GM18951 (cell line): ENCODE measurements at regions of chr11 and their contacts with region 1.

Region 1: GRCh38 chr11:87352759-87353707 is 315.3 kb downstream of the TMEM135 start:
- POLR2A ChIP-seq: no peak

Region 2: DNA sequence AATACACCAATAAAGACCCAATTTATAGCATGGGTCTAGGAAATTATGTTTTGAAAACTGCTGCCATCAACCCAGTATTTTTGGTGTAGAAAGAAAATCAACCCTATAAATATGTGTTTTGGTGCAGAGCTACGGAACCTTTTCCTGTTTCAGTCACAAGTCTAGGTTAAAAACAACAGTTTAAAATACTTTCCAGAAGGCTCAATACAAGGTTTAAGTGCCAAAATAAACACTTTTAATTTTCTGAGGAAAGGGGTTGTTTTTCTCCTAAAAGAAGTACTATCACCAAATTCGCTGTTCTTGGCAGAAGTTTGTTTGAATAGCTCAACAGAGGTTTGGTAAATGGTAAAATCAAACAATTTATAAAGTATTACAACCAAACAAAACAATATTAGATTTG is 114.0 kb before region 1 on chr11:
- in situ Hi-C with region 1: no loop called
- POLR2A ChIP-seq: no peak

Region 3: DNA sequence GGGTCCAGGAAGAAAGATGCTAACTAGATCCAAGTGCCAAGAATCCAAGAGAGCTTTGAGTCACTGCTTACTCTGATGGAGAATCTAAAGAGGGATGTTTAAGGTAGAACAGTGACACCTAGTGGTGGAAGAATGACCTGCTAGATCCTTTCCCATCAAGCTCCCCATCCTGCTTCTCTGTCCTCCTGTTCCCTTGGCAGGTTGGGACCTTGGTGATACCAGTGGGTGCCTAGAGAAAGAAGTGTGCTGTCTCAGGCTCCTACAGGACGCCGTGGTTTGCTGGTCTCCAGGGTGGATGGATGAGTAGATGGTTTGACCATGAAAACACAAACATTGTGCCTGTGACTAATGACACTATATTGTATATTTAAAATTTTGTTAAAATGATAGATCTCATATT is 68.4 kb after region 1 on chr11:
- in situ Hi-C with region 1: loop called (anchors 10 kb)
- POLR2A ChIP-seq: no peak